Naive thymus-derived CD4-positive, alpha-beta T cell (primary cell): ENCODE measurements at regions of chr3 and their contacts with region 1.

Region 1: GRCh38 chr3:150434234-150434633 is 26.1 kb downstream of the TSC22D2 start:
- DNase-seq: no peak
- ATAC-seq: no peak
- H3K4me3 ChIP-seq: no peak overlapping the region
- H3K4me3 Mint-ChIP-seq: no peak overlapping the region
- H3K27ac ChIP-seq: no peak overlapping the region
- H3K27ac Mint-ChIP-seq: peak overlapping the region in 1 of 9 donors; percentile 38
- H3K4me1 ChIP-seq: no peaks in the 10 kb centered on the region
- H3K4me1 Mint-ChIP-seq: peaks cover 5 to 56% (median 31%) of the 10 kb centered on the region in 7 donors
- H3K27me3 ChIP-seq: no peaks in the 10 kb centered on the region
- H3K27me3 Mint-ChIP-seq: no peaks in the 10 kb centered on the region

Region 2: DNA sequence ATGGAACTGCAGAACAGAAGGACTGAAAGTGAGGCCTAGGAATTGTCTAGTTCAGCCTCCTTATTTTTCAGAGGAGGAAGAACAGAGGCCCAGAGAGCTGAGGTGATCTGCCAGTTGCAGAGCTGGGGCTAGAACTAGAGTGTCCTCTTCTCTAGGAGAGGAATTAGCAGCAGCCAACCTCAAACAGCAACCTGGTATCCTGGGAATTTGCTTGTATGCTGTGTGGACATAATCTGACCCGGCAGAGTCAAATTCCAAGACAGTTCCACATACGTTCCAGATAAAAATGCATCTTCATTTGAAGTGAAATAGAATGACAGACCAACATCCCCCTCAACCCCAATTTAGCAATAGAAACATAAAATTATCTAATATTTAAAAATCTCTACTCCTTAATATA is 39.6 kb before region 1 on chr3:
- CTCF ChIA-PET with region 1: no interaction called
- POLR2A ChIA-PET with region 1: no interaction called
- intact Hi-C with region 1: no loop called
- DNase-seq: no peak
- ATAC-seq: no peak
- H3K4me3 ChIP-seq: no peak overlapping the region
- H3K4me3 Mint-ChIP-seq: no peak overlapping the region
- H3K27ac ChIP-seq: no peak overlapping the region
- H3K27ac Mint-ChIP-seq: no peak overlapping the region
- H3K4me1 ChIP-seq: no peaks in the 10 kb centered on the region
- H3K4me1 Mint-ChIP-seq: peaks cover 0 to 8% (median 4%) of the 10 kb centered on the region in 7 donors
- H3K27me3 ChIP-seq: no peaks in the 10 kb centered on the region
- H3K27me3 Mint-ChIP-seq: peaks cover 0 to 20% (median 5%) of the 10 kb centered on the region in 5 donors

Region 3: DNA sequence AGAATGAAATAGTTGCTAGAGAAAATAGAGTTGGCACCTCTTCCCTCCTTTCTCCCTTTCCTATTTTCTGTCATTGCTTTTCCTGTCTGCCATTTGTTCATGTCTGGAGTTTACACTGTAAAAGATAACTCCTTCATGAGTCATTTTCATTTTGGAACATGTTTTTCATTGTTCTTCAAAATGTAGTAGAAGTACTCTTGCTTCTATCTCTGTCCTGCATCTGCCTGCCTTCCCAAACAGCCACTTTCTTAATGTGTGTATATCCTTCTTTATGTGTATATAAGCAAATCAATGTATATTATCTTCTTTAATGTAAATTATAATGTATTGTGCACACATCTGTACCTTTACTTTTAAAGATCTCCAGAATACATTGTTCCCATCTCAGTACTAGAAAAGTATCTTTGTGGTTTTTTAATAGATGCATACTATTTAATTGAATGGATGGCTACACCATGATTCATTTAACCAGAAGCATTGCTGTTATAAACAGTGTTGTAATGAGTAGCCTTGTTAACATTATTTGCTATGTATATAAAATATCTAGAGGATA is 15.0 kb after region 1 on chr3:
- CTCF ChIA-PET with region 1: no interaction called
- POLR2A ChIA-PET with region 1: interaction called, 4 read pairs
- intact Hi-C with region 1: loop called in 1 of 2 experiments (anchors 2 kb)
- DNase-seq: no peak
- ATAC-seq: no peak
- H3K4me3 ChIP-seq: no peak overlapping the region
- H3K4me3 Mint-ChIP-seq: peak overlapping the region in 1 of 10 donors; percentile 2
- H3K27ac ChIP-seq: no peak overlapping the region
- H3K27ac Mint-ChIP-seq: peak overlapping the region in 2 of 9 donors; percentile 10 to 37
- H3K4me1 ChIP-seq: peaks cover 3 to 4% of the 10 kb centered on the region in 2 donors
- H3K4me1 Mint-ChIP-seq: peaks cover 18 to 64% (median 52%) of the 10 kb centered on the region in 7 donors
- H3K27me3 ChIP-seq: no peaks in the 10 kb centered on the region
- H3K27me3 Mint-ChIP-seq: no peaks in the 10 kb centered on the region